ENCODE measurements at regions of chr14 and their contacts with region 1.

Region 1: DNA sequence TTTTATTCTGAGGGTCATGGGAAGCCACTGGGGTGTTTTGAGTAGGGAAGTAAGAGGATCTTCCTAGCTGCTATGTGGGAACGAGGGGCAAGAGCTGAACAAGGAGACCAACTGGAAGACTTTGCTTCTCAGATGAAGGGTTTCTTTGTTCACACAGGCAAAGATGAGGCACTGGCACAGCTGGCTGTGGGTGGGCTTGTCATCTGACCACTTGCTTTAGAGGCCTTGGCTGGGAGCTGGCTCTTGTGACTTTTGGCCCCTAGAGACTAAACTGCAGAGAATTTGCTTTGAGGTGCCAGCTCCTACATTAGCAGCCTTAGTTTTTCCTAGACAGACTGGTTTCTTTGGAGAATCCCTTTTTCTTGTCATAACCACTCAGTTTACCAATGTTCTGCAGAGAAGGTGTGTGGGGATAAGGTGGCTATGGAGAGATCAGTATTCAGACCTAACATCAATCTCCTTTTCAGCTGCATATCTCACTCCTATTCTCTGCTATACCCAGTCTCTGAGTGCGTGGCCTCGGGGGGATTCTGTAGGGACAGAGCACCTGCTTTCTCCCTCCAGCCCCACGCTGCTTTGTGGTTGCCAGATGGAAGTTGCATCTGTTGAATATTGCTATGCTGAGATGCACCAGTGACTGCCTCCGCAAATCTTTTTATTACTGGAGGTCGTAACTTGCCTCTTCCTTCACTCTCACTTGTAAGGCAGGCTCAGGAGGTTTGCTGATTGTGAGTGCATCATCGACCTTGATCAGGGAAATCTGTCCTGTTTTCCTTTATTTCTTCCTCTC is 12.7 kb downstream of the PPP2R5C start:
- DNase-seq: no peak
- H3K4me3 ChIP-seq: no peak overlapping the region
- H3K4me3 Mint-ChIP-seq: no peak overlapping the region
- H3K27ac ChIP-seq: no peak overlapping the region
- H3K27ac Mint-ChIP-seq: no peak overlapping the region
- H3K4me1 ChIP-seq: no peaks in the 10 kb centered on the region
- H3K4me1 Mint-ChIP-seq: no peaks in the 10 kb centered on the region
- H3K27me3 ChIP-seq: peaks cover 10% of the 10 kb centered on the region in 2 donors
- H3K27me3 Mint-ChIP-seq: peaks cover 17 to 26% (median 20%) of the 10 kb centered on the region in 3 donors
- CTCF ChIP-seq: no peak

Region 2: GRCh38 chr14:101707068-101707842 is 66.9 kb before region 1 on chr14:
- intact Hi-C with region 1: loop called in 1 of 2 experiments (anchors 5 kb)
- DNase-seq: peak; percentile 78 to 87 (median 82)
- H3K4me3 ChIP-seq: peak overlapping the region in 1 of 3 experiments; percentile 31
- H3K4me3 Mint-ChIP-seq: peak overlapping the region in 1 of 2 donors; percentile 63
- H3K27ac ChIP-seq: no peak overlapping the region
- H3K27ac Mint-ChIP-seq: peak overlapping the region in 3 of 7 donors; percentile 13 to 83 (median 41)
- H3K4me1 ChIP-seq: peaks cover 23 to 34% of the 10 kb centered on the region in 2 donors
- H3K4me1 Mint-ChIP-seq: peaks cover 28% of the 10 kb centered on the region
- H3K27me3 ChIP-seq: peaks cover 15 to 33% of the 10 kb centered on the region in 2 donors
- H3K27me3 Mint-ChIP-seq: peaks cover 37 to 56% (median 40%) of the 10 kb centered on the region in 3 donors
- CTCF ChIP-seq: peak; percentile 84

Region 3: DNA sequence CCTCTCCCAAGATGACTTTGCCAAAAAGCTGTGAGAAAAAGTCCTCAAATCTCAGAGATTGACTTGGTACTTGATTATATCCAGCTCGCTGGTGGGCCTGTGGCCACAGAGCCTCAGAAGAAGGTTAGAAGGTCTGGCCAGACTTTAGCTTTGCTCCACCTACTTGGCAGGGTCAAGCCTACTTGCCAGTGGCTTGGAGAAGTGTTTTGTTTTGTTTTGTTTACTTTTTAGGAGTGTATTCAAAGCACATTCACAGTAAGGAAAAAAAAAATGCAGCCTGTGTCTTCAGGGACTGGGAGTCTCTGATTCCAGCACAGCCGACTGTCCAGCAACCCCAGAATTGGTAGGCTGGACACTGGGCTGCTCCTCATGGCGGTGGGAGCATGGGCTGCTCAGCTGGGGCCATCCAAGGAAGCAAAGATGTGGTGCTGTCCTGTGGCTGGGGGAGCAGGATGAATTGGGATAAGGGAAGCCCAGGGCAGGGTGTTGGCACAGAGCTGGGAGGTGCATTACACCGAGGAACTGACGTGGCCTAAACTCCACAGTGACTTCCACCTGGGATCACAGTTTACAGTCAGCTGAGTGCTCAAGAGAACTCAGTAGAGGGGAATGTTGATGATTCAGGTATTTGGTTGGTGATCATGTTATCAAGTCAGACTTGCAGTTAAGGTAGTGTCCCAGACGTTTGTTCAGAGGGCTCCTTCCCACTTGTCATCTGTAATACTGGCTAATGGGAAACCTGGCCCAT is 60.8 kb after region 1 on chr14:
- intact Hi-C with region 1: loop called (anchors 5 kb)
- DNase-seq: no peak
- H3K4me3 ChIP-seq: no peak overlapping the region
- H3K4me3 Mint-ChIP-seq: no peak overlapping the region
- H3K27ac ChIP-seq: peak overlapping the region in 1 of 2 donors; percentile 27
- H3K27ac Mint-ChIP-seq: peak overlapping the region in 4 of 7 donors; percentile 63 to 81 (median 74)
- H3K4me1 ChIP-seq: no peaks in the 10 kb centered on the region
- H3K4me1 Mint-ChIP-seq: no peaks in the 10 kb centered on the region
- H3K27me3 ChIP-seq: no peaks in the 10 kb centered on the region
- H3K27me3 Mint-ChIP-seq: peaks cover 0 to 2% (median 0%) of the 10 kb centered on the region in 3 donors
- CTCF ChIP-seq: no peak

Region 4: GRCh38 chr14:101843665-101844064 is 69.5 kb after region 1 on chr14:
- intact Hi-C with region 1: loop called in 1 of 2 experiments (anchors 5 kb)
- DNase-seq: peak; percentile 74 to 85 (median 84)
- H3K4me3 ChIP-seq: no peak overlapping the region
- H3K4me3 Mint-ChIP-seq: no peak overlapping the region
- H3K27ac ChIP-seq: peak overlapping the region in 1 of 2 donors; percentile 66
- H3K27ac Mint-ChIP-seq: peak overlapping the region; percentile 60 to 89 (median 84)
- H3K4me1 ChIP-seq: peaks cover 8 to 13% of the 10 kb centered on the region in 2 donors
- H3K4me1 Mint-ChIP-seq: peaks cover 31% of the 10 kb centered on the region
- H3K27me3 ChIP-seq: no peaks in the 10 kb centered on the region
- H3K27me3 Mint-ChIP-seq: peaks cover 0 to under 1% (median 0%) of the 10 kb centered on the region in 3 donors
- CTCF ChIP-seq: peak; percentile 88

Region 5: DNA sequence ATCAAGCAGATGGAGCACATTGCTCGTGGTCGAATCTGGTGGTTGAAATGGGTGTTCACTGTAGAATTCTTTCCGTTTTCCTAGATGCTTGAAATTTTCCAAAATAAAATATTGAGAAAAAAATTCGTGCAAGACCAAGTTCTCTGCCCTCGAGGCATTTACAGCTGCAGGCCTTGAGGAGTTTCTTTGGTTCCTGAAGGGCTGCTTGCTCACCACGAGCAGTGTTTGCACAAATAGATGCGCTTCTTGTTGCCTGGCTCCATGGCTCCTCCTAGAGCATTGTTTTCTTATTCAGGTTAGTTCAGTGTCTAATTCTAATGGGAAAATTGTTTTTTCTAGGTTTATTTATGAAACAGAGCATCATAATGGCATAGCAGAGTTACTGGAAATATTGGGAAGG is 115.7 kb after region 1 on chr14:
- intact Hi-C with region 1: loop called in 1 of 2 experiments (anchors 5 kb)
- DNase-seq: no peak
- H3K4me3 ChIP-seq: no peak overlapping the region
- H3K4me3 Mint-ChIP-seq: no peak overlapping the region
- H3K27ac ChIP-seq: no peak overlapping the region
- H3K27ac Mint-ChIP-seq: peak overlapping the region in 1 of 7 donors; percentile 23
- H3K4me1 ChIP-seq: no peaks in the 10 kb centered on the region
- H3K4me1 Mint-ChIP-seq: no peaks in the 10 kb centered on the region
- H3K27me3 ChIP-seq: no peaks in the 10 kb centered on the region
- H3K27me3 Mint-ChIP-seq: no peaks in the 10 kb centered on the region
- CTCF ChIP-seq: no peak

Region 6: DNA sequence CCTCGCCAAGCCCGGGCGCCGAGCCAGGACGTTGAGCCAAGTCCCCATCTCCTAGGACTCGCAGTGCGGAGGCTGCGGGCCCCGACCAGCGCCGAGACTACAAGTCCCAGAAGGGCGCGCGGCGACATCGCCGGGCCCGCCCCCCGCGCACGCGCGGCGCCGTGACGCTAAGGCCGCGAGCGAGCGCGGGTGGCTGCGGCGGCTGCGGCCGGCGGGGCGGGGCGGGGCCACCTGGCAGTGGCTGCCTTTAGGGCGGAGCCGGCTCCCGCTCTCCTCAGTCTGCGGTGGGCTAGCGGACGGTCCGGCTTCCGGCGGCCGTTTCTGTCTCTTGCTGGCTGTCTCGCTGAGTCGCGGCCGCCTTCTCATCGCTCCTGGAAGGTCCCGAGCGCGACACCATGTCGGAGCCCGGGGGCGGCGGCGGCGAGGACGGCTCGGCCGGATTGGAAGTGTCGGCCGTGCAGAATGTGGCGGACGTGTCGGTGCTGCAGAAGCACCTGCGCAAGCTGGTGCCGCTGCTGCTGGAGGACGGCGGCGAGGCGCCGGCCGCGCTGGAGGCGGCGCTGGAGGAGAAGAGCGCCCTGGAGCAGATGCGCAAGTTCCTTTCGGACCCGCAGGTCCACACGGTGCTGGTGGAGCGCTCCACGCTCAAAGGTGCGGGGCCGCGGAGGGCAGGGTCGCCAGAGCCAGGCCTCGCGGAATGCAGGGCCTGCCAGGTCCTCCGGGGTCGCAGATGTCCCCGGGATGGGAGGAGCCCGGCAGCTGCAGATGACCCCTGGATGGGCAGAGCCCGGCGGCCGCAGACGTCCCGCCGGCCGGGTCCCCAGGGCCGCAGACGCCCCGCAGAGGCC is 190.3 kb after region 1 on chr14 and contains the start of gene DYNC1H1:
- intact Hi-C with region 1: loop called in 1 of 2 experiments (anchors 5 kb)
- DNase-seq: peak; percentile 69 to 91 (median 86)
- H3K4me3 ChIP-seq: peak within 1 kb of the TSS; percentile 65 to 95 (median 93)
- H3K4me3 Mint-ChIP-seq: peak within 1 kb of the TSS; percentile 91 to 94
- H3K27ac ChIP-seq: peak within 1 kb of the TSS; percentile 78 to 85
- H3K27ac Mint-ChIP-seq: peak within 1 kb of the TSS; percentile 88 to 94 (median 92)
- H3K4me1 ChIP-seq: peaks cover 17 to 25% of the 10 kb centered on the region in 2 donors
- H3K4me1 Mint-ChIP-seq: peaks cover 30% of the 10 kb centered on the region
- H3K27me3 ChIP-seq: no peaks in the 10 kb centered on the region
- H3K27me3 Mint-ChIP-seq: peaks cover 2 to 5% (median 3%) of the 10 kb centered on the region in 3 donors
- CTCF ChIP-seq: no peak
- polyA plus RNA-seq, gene DYNC1H1: 14.7 to 87.3 (median 23.6) TPM